ENCODE measurements at regions of chr15 and their contacts with region 1.

Region 1: GRCh38 chr15:65595960-65596359 is 15.0 kb downstream of the INTS14 start:
- DNase-seq: peak in 2 of 9 donors; percentile 13 to 26
- ATAC-seq: no peak
- H3K4me3 ChIP-seq: no peak overlapping the region
- H3K4me3 Mint-ChIP-seq: no peak overlapping the region
- H3K27ac ChIP-seq: no peak overlapping the region
- H3K27ac Mint-ChIP-seq: no peak overlapping the region
- H3K4me1 ChIP-seq: no peaks in the 10 kb centered on the region
- H3K4me1 Mint-ChIP-seq: peaks cover 0 to 5% (median 0%) of the 10 kb centered on the region in 7 donors
- H3K27me3 ChIP-seq: no peaks in the 10 kb centered on the region
- H3K27me3 Mint-ChIP-seq: no peaks in the 10 kb centered on the region

Region 2: GRCh38 chr15:65856821-65857455 is 261.0 kb after region 1 on chr15:
- CTCF ChIA-PET with region 1: no interaction called
- POLR2A ChIA-PET with region 1: no interaction called
- intact Hi-C with region 1: loop called in 1 of 2 experiments (anchors 2 kb)
- DNase-seq: peak; percentile 54 to 83 (median 77)
- ATAC-seq: peak; percentile 94
- H3K4me3 ChIP-seq: no peak overlapping the region
- H3K4me3 Mint-ChIP-seq: no peak overlapping the region
- H3K27ac ChIP-seq: no peak overlapping the region
- H3K27ac Mint-ChIP-seq: peak overlapping the region in 2 of 9 donors; percentile 21 to 69
- H3K4me1 ChIP-seq: no peaks in the 10 kb centered on the region
- H3K4me1 Mint-ChIP-seq: peaks cover 0 to 17% (median 13%) of the 10 kb centered on the region in 7 donors
- H3K27me3 ChIP-seq: no peaks in the 10 kb centered on the region
- H3K27me3 Mint-ChIP-seq: peaks cover 0 to 15% (median 0%) of the 10 kb centered on the region in 5 donors